ENCODE measurements at regions of chr10 and their contacts with region 1.

Region 1: DNA sequence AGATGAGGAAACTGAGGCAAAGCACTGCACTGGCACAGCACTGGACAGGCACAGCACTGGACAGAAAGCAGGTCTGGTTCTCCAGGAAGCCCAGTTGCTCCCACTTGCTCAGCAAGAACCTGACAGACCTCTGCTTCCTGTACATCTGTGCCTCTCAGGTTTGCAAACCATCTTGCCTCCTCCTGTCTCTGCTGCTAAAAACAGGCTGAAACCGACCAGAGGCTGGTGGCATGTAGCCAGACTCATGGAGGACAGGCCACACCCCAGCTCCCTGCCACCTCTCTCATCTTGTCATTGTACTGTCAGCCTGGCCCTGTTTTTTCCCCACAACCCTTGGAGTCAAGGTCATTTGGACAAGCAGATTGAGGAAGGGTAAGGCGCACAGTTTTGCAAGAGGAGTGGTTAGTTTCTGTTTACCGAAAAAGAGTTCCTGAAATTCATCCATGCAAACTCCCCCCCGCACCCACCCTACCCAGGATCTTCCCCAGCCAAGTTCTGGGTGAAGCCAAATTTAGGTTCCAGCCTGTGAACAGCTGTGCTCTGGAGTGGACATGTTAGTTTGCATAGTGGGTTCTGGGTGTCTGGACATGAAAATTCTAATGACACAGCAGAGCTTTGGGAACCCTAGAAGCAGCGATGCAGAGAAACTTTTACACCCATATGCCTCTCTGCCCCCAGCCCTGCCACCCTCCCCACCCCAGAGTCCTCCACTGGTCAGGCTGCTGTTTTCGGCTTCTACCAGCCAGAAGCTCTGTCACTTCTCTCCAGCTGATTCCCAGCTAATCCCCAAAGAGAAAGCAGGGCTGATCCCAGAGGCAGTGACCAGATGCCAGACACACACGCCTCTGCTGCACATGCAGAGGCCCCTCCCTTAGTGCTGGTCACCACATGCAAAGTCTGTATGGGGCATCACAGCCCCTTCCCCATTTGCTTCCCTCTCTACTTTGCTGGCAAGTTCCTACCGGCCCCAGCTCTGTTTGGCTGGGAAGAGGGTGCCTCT is 8.5 kb upstream of the C10orf105 start:
- DNase-seq: peak; percentile 83
- ATAC-seq: peak; percentile 50
- H3K4me3 Mint-ChIP-seq: peak overlapping the region; percentile 71
- H3K27ac Mint-ChIP-seq: peak overlapping the region; percentile 98
- H3K4me1 Mint-ChIP-seq: peaks cover 98% of the 10 kb centered on the region
- H3K27me3 Mint-ChIP-seq: no peaks in the 10 kb centered on the region

Region 2: DNA sequence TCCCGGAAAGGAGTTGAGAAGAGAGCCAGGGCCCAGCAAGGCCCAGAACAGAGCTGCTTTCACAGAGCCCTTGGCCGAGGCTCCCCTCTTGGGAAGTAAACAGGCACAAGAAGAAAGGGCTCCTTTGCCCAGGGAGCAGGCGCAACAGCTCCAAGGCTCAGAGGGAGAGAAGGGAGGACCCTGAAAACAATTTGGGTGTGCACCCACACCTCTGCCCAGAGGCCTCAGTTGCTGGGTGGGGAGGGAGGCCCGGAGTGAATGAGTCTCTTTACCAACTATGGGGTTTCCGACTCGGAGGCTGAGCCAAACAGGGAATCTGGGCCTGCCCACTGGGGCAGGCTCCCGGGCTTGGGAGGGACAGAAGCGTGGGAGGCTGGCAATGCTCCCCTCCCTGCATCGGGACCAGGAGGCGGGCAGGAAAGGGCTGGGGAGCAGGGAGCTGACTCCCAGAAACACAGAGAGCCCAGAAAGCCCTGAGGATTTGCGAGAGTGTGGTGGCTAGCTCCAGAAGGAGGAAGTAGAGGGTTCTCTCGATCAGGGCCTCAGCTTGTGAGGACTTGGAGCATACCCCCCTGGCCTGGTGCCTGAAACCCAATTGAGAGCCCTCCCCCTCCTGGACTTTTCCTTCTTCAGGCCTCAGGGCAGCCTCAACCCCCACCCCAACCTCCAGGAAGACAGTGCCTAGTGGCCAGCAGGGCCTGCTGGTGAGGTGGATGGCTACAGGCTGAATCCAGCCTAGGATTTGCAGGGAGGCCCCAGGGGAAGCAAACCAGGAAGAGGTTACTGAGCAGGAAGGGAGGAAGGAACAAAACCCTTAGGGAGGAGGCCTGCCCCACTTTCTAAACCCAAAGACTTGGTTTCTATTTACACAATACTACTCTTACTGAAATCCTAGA is 14.7 kb before region 1 on chr10:
- CTCF ChIA-PET with region 1: interaction called, 24 read pairs
- POLR2A ChIA-PET with region 1: interaction called, 15 read pairs
- DNase-seq: peak; percentile 50
- ATAC-seq: peak; percentile 72
- H3K4me3 Mint-ChIP-seq: peak overlapping the region; percentile 80
- H3K27ac Mint-ChIP-seq: peak overlapping the region; percentile 99
- H3K4me1 Mint-ChIP-seq: peaks cover 68% of the 10 kb centered on the region
- H3K27me3 Mint-ChIP-seq: no peaks in the 10 kb centered on the region

Region 3: DNA sequence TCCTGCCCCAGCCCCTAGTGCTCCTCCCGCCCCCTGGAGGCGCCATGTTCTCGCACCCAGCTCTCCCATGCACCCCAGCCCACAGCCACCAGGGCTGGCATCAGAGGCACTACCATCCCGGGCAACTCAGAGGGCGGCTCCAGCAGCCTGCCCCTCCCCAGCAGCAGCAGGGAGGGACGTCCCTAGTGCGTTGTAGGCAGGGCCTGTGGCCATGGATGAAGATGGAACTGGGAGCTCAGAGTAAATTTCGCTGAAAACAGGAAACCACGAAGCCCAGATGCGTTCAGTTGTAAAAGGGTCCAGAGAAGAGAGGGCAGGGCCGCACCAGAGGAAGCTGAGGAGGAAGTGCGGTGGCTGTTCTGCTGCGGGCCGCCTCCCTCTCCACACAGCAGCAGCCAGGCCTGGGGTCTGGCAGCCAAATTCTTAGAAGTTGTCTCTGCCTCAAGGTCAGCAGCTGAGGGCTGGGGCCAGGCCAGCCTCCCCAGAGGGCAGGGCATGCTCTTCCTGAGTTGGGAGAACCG is 20.7 kb after region 1 on chr10:
- CTCF ChIA-PET with region 1: interaction called, 116 read pairs
- POLR2A ChIA-PET with region 1: interaction called, 34 read pairs
- DNase-seq: peak; percentile 94
- ATAC-seq: peak; percentile 83
- H3K4me3 Mint-ChIP-seq: peak overlapping the region; percentile 61
- H3K27ac Mint-ChIP-seq: peak overlapping the region; percentile 93
- H3K4me1 Mint-ChIP-seq: peaks cover 98% of the 10 kb centered on the region
- H3K27me3 Mint-ChIP-seq: no peaks in the 10 kb centered on the region

Region 4: GRCh38 chr10:71766702-71767419 is 38.8 kb after region 1 on chr10:
- CTCF ChIA-PET with region 1: interaction called, 186 read pairs
- POLR2A ChIA-PET with region 1: interaction called, 87 read pairs
- DNase-seq: peak; percentile 50
- ATAC-seq: no peak
- H3K4me3 Mint-ChIP-seq: peak overlapping the region; percentile 3
- H3K27ac Mint-ChIP-seq: peak overlapping the region; percentile 82
- H3K4me1 Mint-ChIP-seq: peaks cover 92% of the 10 kb centered on the region
- H3K27me3 Mint-ChIP-seq: no peaks in the 10 kb centered on the region

Region 5: GRCh38 chr10:71812016-71812912 is 84.2 kb after region 1 on chr10:
- CTCF ChIA-PET with region 1: interaction called, 16 read pairs
- POLR2A ChIA-PET with region 1: no interaction called
- DNase-seq: peak; percentile 87
- ATAC-seq: peak; percentile 97
- H3K4me3 Mint-ChIP-seq: no peak overlapping the region
- H3K27ac Mint-ChIP-seq: peak overlapping the region; percentile 51
- H3K4me1 Mint-ChIP-seq: peaks cover 21% of the 10 kb centered on the region
- H3K27me3 Mint-ChIP-seq: no peaks in the 10 kb centered on the region

Measured in activated CD8-positive, alpha-beta T cell treated with anti-CD3 and anti-CD28 coated beads, Interleukin-2, amount 10 ng/mL, durations not matched to agents 7 days and 5 days (primary cell).